GM12878 (cell line): ENCODE measurements at regions of chrX and their contacts with region 1.

Region 1: DNA sequence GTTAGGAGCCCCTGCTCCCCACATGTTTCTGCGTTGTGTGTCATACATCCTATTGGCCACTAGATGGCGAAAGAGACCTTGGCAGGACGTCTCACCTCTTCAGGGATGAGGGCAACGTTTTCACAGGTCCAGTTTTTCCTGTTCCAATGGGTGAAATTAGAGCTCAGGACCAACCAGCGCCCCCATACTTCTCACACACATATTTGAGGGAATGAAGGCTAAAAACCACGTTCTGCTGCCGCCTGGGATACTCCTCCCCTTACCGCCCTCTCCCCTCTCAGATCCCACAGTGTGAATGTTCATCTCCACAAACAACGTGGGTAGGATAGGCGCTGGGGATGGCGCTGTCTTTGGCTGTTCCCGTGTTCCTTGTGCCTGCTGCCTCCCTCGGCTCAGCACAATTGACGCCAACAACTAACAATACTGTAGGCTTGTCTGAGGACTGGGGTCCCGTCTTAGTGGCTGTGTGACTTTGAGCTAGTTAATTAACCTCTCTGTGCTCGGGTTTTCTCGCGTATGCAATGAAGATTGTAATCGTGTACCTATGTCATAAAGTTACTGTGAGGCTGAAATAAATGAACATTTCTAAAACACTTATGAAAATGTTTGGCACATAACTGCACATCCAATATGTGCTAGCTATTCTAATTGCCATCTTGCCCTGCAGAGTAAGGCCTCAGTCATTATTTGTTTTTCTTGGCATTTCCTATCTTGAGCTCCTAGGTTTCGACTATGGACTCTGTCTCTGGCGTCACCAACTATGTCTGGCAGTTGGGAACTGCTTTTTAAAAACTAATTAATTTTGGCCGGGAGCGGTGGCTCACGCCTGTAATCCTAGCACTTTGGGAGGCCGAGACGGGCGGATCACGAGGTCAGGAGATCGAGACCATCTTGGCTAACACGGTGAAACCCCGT is 181.3 kb upstream of the STK26 start:
- DNase-seq: no peak
- ATAC-seq: peak; percentile 98
- H3K4me3 ChIP-seq: no peak overlapping the region
- H3K27ac ChIP-seq: no peak overlapping the region
- H3K4me1 ChIP-seq: no peaks in the 10 kb centered on the region
- H3K27me3 ChIP-seq: no peaks in the 10 kb centered on the region
- CTCF ChIP-seq: peak; percentile 85 to 90 (median 88)
- EP300 ChIP-seq: no peak
- POLR2A ChIP-seq: no peak
- RAD21 ChIP-seq: peak; percentile 96

Region 2: GRCh38 chrX:132631579-132632232 is 790.0 kb after region 1 on chrX:
- CTCF ChIA-PET with region 1: interaction called, 6 read pairs
- POLR2A ChIA-PET with region 1: no interaction called
- RAD21 ChIA-PET with region 1: interaction called, 5 read pairs
- SMC1A ChIA-PET with region 1: interaction called, 5 read pairs
- in situ Hi-C with region 1: no loop called
- intact Hi-C with region 1: loop called (anchors 5 kb)
- DNase-seq: no peak
- ATAC-seq: peak; percentile 80
- H3K4me3 ChIP-seq: no peak overlapping the region
- H3K27ac ChIP-seq: no peak overlapping the region
- H3K4me1 ChIP-seq: no peaks in the 10 kb centered on the region
- H3K27me3 ChIP-seq: no peaks in the 10 kb centered on the region
- CTCF ChIP-seq: peak; percentile 51 to 60 (median 58); a peak in 5 of 6 replicates
- EP300 ChIP-seq: no peak
- POLR2A ChIP-seq: no peak
- RAD21 ChIP-seq: peak; percentile 69

Region 3: GRCh38 chrX:133097031-133097430 is 1255.3 kb after region 1 on chrX and contains the start of gene USP26:
- CTCF ChIA-PET with region 1: no interaction called
- POLR2A ChIA-PET with region 1: no interaction called
- RAD21 ChIA-PET with region 1: no interaction called
- SMC1A ChIA-PET with region 1: no interaction called
- in situ Hi-C with region 1: no loop called
- intact Hi-C with region 1: loop called (anchors 5 kb)
- DNase-seq: no peak
- ATAC-seq: no peak
- H3K4me3 ChIP-seq: no peak within 1 kb of the TSS
- H3K27ac ChIP-seq: no peak within 1 kb of the TSS
- H3K4me1 ChIP-seq: no peaks in the 10 kb centered on the region
- H3K27me3 ChIP-seq: no peaks in the 10 kb centered on the region
- CTCF ChIP-seq: no peak
- EP300 ChIP-seq: no peak
- POLR2A ChIP-seq: no peak
- RAD21 ChIP-seq: no peak
- polyA plus RNA-seq, gene USP26: not detected